Activated CD8-positive, alpha-beta T cell treated with anti-CD3 and anti-CD28 coated beads, Interleukin-2, amount 10 ng/mL, durations not matched to agents 7 days and 5 days (primary cell): ENCODE measurements at regions of chr19 and their contacts with region 1.

Region 1: DNA sequence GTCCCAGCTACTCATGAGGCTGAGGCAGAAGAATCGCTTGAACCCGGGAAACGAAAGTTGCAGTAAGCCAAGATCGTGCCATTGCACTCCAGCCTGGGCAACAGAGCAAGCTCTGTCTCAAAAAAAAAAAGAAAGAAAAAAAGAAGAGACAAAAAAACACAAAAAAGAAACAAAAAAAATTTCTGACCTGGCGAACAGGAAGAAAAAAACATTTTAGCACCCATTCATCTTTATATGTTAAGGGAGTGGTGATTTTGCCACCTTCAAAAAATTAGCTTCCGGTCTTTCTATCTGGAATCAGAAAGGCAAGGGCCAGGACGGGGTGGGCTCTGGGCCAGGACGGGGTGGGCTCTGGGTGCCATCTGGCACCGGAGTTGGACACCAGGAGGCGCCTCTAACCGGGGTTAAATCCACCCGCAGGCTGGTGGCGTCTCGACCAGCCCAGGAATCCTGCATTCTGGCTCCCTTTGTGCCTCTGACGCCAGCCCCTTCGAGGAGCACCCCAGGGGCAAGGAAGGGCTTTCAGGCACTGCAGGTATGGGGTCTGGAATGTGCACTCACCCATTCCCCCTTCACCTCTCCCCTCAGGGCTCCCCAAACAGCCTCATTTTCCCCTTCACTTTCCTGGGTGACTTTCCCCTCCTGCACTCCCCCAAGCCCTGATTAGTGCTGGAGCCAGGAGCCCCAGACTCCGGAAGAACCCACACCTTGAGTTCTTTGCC is 10.4 kb upstream of the ZSWIM4 start:
- DNase-seq: peak; percentile 81
- ATAC-seq: peak; percentile 64
- H3K4me3 Mint-ChIP-seq: peak overlapping the region; percentile 31
- H3K27ac Mint-ChIP-seq: peak overlapping the region; percentile 72
- H3K4me1 Mint-ChIP-seq: peaks cover 43% of the 10 kb centered on the region
- H3K27me3 Mint-ChIP-seq: no peaks in the 10 kb centered on the region

Region 2: DNA sequence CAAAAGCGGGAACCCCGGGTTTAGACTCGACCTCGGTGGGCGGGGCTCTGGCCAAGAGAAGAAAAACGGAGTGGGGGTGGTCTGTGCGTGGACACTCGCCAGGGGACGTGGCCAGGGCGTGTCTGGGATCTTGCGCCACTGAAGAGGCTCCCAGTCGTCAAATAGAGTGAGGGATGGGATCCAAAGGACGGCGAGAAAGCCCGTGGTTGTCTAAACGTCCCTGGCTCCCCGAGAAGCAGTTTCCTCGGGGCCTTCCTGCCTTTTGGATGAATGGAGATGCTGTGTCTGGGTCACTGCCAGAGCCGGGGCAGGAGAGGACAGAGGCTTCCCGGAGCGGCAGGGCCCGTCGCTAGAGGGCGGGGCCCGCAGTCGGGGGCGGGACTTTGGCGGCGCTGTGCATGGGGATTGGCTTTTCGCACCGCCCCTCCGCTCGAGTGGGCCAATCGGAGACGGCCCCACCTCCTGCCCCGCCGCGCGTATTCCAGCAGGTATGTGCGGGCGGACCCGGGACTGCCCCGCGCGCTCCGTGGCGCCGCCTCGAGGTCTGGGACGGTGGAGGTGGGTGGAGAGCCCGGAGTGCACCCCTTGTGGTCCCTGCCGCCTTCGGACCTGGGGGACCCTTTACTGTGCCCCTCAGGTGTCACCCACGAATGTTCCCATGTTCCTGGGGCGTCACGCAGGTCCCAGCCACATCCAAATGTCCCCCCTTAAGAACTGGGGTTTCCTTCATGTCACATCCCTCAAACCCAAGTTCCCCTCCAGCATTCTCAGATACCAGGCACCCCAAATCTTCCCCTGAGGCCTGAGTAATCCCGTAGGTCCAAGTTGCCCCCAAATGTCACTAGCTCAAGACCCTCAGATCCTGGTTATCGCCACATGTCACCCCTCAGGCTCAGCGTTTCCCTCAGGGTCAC is 48.7 kb after region 1 on chr19:
- CTCF ChIA-PET with region 1: interaction called, 16 read pairs
- POLR2A ChIA-PET with region 1: interaction called, 36 read pairs
- DNase-seq: peak; percentile 93
- ATAC-seq: peak; percentile 64
- H3K4me3 Mint-ChIP-seq: peak overlapping the region; percentile 68
- H3K27ac Mint-ChIP-seq: peak overlapping the region; percentile 81
- H3K4me1 Mint-ChIP-seq: peaks cover 51% of the 10 kb centered on the region
- H3K27me3 Mint-ChIP-seq: no peaks in the 10 kb centered on the region

Region 3: GRCh38 chr19:13839130-13839937 is 54.4 kb after region 1 on chr19:
- CTCF ChIA-PET with region 1: interaction called, 16 read pairs
- POLR2A ChIA-PET with region 1: interaction called, 36 read pairs
- DNase-seq: peak; percentile 90
- ATAC-seq: peak; percentile 22
- H3K4me3 Mint-ChIP-seq: peak overlapping the region; percentile 89
- H3K27ac Mint-ChIP-seq: peak overlapping the region; percentile 92
- H3K4me1 Mint-ChIP-seq: peaks cover 52% of the 10 kb centered on the region
- H3K27me3 Mint-ChIP-seq: no peaks in the 10 kb centered on the region

Region 4: GRCh38 chr19:13846557-13847406 is 61.9 kb after region 1 on chr19:
- CTCF ChIA-PET with region 1: interaction called, 11 read pairs
- POLR2A ChIA-PET with region 1: interaction called, 28 read pairs
- DNase-seq: peak; percentile 97
- ATAC-seq: peak; percentile 61
- H3K4me3 Mint-ChIP-seq: peak overlapping the region; percentile 79
- H3K27ac Mint-ChIP-seq: peak overlapping the region; percentile 99
- H3K4me1 Mint-ChIP-seq: peaks cover 61% of the 10 kb centered on the region
- H3K27me3 Mint-ChIP-seq: no peaks in the 10 kb centered on the region